Psoas muscle (tissue), 8 donors: ENCODE measurements at regions of chr7 and their contacts with region 1.

Region 1: DNA sequence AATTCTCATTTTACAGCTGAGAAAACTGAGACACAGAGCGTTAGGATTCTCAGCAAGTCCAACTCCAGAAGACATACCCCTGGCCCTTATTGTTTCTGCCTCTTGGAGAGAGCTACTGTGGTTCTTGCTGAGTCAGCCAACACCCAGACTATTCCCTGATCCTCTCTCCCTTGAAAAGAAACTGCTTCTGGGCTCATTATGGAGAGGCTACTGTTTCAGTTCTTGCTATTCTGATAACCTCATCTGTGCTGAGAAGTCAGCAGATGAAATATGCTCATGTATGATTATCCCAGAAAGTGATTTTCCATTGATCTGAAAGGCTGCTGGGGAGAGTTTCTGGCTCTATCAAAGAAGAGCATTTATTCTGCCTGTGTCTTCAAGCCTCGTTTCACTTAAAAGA is 455.6 kb upstream of the COBL start:
- DNase-seq: no peak
- ATAC-seq: no peak
- H3K4me3 ChIP-seq: no peak overlapping the region
- H3K27ac ChIP-seq: no peak overlapping the region
- H3K4me1 ChIP-seq: no peaks in the 10 kb centered on the region
- H3K27me3 ChIP-seq: no peaks in the 10 kb centered on the region
- CTCF ChIP-seq: no peak

Region 2: GRCh38 chr7:51802718-51803117 is 30.5 kb after region 1 on chr7:
- intact Hi-C with region 1: loop called in 1 of 2 experiments (anchors 2 kb)
- DNase-seq: no peak
- ATAC-seq: no peak
- H3K4me3 ChIP-seq: no peak overlapping the region
- H3K27ac ChIP-seq: no peak overlapping the region
- H3K4me1 ChIP-seq: no peaks in the 10 kb centered on the region
- H3K27me3 ChIP-seq: no peaks in the 10 kb centered on the region
- CTCF ChIP-seq: no peak